ENCODE measurements at regions of chr16 and their contacts with region 1.

Region 1: DNA sequence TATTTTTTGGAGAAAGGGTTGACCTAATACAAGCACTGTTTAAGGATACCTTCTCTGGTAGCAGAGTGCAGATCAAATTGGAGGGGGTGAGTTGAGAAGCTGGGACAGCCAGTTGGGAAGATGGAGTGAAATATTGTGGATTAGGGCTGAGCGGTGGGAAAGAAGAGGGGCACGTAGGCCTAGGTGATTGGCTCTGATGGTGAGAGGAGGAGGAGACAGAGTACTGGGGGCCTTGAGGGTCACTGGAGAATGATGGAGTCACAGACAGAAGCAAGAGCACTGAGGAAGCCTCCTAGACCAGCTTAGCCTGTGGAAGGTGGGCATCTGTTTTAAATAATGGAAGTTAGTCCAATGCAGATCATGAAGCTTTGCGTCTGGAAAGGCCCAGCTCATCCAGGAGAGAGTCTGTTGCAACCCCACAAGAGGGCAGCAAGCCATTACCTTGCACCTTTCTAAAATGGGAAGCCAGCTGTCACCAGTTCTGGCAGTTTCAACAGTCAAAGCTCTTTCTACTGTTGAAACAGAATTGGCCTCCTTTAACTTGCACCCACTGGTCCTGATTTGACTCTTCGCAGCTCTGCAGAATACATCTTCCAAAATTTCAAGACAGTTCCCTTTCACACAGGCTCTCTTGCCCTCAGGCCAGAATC is 11.8 kb downstream of the SLC9A5 start:
- DNase-seq: peak; percentile 69
- H3K4me3 Mint-ChIP-seq: no peak overlapping the region
- H3K27ac Mint-ChIP-seq: no peak overlapping the region
- H3K4me1 Mint-ChIP-seq: peaks cover 8% of the 10 kb centered on the region
- H3K27me3 Mint-ChIP-seq: peaks cover 42% of the 10 kb centered on the region
- CTCF ChIP-seq: peak; percentile 71

Region 2: GRCh38 chr16:67173808-67174705 is 86.5 kb before region 1 on chr16:
- CTCF ChIA-PET with region 1: no interaction called
- intact Hi-C with region 1: no loop called
- DNase-seq: peak; percentile 95
- H3K4me3 Mint-ChIP-seq: peak overlapping the region; percentile 89
- H3K27ac Mint-ChIP-seq: peak overlapping the region; percentile 90
- H3K4me1 Mint-ChIP-seq: peaks cover 59% of the 10 kb centered on the region
- H3K27me3 Mint-ChIP-seq: no peaks in the 10 kb centered on the region
- CTCF ChIP-seq: no peak

Region 3: GRCh38 chr16:67279296-67280089 is 18.9 kb after region 1 on chr16 and contains the start of gene PLEKHG4:
- CTCF ChIA-PET with region 1: interaction called, 68 read pairs
- intact Hi-C with region 1: no loop called
- DNase-seq: peak; percentile 87
- H3K4me3 Mint-ChIP-seq: peak within 1 kb of the TSS; percentile 70
- H3K27ac Mint-ChIP-seq: peak within 1 kb of the TSS; percentile 51
- H3K4me1 Mint-ChIP-seq: peaks cover 28% of the 10 kb centered on the region
- H3K27me3 Mint-ChIP-seq: peaks cover 10% of the 10 kb centered on the region
- CTCF ChIP-seq: peak; percentile 94
- total RNA-seq, gene PLEKHG4: 5.5 and 9.2 TPM in 2 replicates

Region 4: DNA sequence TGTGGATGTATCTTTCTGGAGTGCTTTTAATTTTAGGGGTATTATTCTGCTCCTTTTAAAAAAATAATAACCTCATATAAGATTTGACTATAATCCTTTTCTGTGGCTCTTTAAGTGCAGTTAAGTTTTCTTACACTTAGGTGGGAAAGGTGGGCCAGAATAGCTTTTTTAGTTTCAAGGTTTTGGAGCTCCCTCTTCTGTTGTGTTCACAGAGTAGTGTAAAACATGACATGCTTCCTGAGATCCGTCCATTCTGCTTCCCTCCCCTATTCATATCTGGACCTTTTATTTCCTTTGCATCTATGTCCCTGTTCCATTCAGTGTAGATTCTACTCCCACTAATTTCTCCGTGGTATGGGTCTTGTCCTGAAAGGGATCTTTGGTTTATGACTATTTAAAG is 78.9 kb after region 1 on chr16:
- CTCF ChIA-PET with region 1: interaction called, 26 read pairs
- intact Hi-C with region 1: loop called (anchors 2 kb)
- DNase-seq: no peak
- H3K4me3 Mint-ChIP-seq: no peak overlapping the region
- H3K27ac Mint-ChIP-seq: no peak overlapping the region
- H3K4me1 Mint-ChIP-seq: no peaks in the 10 kb centered on the region
- H3K27me3 Mint-ChIP-seq: no peaks in the 10 kb centered on the region
- CTCF ChIP-seq: no peak

Region 5: GRCh38 chr16:67399181-67399733 is 138.7 kb after region 1 on chr16:
- CTCF ChIA-PET with region 1: interaction called, 17 read pairs
- intact Hi-C with region 1: loop called (anchors 5 kb)
- DNase-seq: peak; percentile 83
- H3K4me3 Mint-ChIP-seq: no peak overlapping the region
- H3K27ac Mint-ChIP-seq: no peak overlapping the region
- H3K4me1 Mint-ChIP-seq: peaks cover 35% of the 10 kb centered on the region
- H3K27me3 Mint-ChIP-seq: no peaks in the 10 kb centered on the region
- CTCF ChIP-seq: peak; percentile 94